OCI-LY7 (cell line): ENCODE measurements at regions of chr3 and their contacts with region 1.

Region 1: GRCh38 chr3:71512000-71512399 is 71.5 kb downstream of the FOXP1 start:
- DNase-seq: peak; percentile 77
- H3K4me3 ChIP-seq: no peak overlapping the region
- H3K27ac ChIP-seq: peak overlapping the region; percentile 14
- H3K4me1 ChIP-seq: peaks cover 38% of the 10 kb centered on the region
- CTCF ChIP-seq: peak; percentile 83

Region 2: DNA sequence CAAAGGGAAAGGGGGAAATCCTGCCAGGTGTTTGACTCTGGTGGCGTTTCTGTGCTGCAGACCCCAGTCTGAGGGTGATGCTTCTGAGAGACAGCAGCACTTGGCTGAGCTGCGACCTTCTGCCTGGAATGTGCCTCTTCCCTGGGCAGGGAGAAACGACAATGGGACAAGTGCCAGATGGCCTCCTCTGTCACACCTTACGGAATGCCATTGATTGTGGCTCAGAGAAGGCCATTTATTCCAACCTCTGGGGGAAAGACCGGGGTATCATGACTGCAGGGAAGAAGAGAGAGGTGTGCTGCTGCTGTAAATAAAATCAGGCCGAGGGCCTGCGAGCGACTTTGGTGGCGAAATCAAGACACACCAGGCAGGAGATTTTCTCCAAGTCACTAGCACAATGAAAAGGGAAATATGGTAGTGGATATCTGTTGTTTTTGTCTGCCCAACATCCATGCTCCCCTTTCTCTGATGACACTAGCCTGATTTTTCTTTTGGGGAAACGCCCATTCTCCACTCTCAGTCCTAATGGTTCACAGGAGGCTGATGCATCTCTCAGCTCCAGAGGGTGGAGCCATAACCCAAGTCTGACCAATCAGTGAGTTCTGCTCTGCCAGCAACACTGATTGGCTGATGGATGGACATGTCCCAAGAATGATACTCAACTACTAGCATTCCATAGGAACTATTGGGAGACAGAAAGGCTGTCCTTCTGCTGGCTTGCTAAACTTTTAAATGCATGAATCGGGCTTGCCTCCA is 264.6 kb before region 1 on chr3:
- CTCF ChIA-PET with region 1: no interaction called
- POLR2A ChIA-PET with region 1: no interaction called
- intact Hi-C with region 1: loop called (anchors 10 kb)
- DNase-seq: peak; percentile 33
- H3K4me3 ChIP-seq: no peak overlapping the region
- H3K27ac ChIP-seq: no peak overlapping the region
- H3K4me1 ChIP-seq: no peaks in the 10 kb centered on the region
- CTCF ChIP-seq: peak; percentile 29; the same call in 1 of the 2 replicates